Mammary epithelial cell (primary cell): ENCODE measurements at regions of chr18 and their contacts with region 1.

Region 1: DNA sequence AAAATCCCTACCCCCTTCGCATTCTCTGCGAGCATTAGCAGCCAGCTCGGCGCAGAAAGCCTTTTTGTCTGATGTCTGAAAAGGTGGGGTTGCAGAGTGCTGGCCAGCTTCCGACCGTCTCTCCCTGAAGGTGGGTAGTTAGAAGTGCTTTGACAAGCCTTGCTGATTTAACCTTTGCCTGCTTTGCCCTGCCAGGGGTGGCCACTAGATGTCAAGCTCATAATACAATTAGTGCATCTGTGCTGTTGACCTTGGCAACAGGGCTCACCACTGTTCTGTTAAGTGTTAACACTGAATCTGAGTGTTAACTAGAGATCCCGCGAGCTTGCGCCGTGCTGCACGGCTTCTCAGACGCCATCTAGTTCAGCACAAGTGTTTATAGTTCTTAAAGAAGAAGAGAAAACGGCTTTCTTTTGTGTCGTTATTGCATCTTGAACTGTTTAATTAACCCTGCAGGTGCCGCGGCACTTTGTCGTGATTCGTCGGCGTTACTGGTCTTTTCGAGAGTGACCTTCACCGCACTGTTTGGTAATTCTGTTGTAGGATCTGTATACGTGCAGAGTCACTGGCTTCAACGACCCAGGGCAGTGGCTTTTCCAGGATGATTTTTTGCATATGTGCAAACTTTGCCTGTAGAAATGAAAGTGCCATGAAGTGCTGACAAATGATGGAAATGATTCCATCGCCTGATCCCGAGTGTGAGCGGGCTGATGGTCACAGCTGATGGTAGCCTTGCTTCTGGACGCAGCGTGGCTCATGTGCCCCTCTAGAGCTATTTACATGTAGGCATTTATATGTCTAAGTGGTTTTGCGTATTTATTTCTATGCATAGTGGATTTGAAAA is 5.5 kb downstream of the SALL3 start:
- DNase-seq: peak; percentile 29
- H3K4me3 ChIP-seq: no peak overlapping the region
- H3K27ac ChIP-seq: no peak overlapping the region
- H3K4me1 ChIP-seq: no peaks in the 10 kb centered on the region
- H3K27me3 ChIP-seq: peaks cover 26% of the 10 kb centered on the region
- CTCF ChIP-seq: peak; percentile 38 to 63

Region 2: GRCh38 chr18:77207540-77207939 is 1777.6 kb before region 1 on chr18:
- CTCF ChIA-PET with region 1: interaction called, 10 read pairs
- dilution Hi-C with region 1: no loop called
- in situ Hi-C with region 1: no loop called
- intact Hi-C with region 1: no loop called
- DNase-seq: peak; percentile 42
- H3K4me3 ChIP-seq: no peak overlapping the region
- H3K27ac ChIP-seq: no peak overlapping the region
- H3K4me1 ChIP-seq: no peaks in the 10 kb centered on the region
- H3K27me3 ChIP-seq: no peaks in the 10 kb centered on the region
- CTCF ChIP-seq: peak; percentile 67 to 78

Region 3: GRCh38 chr18:78857314-78858150 is 127.6 kb before region 1 on chr18:
- CTCF ChIA-PET with region 1: no interaction called
- dilution Hi-C with region 1: no loop called
- in situ Hi-C with region 1: no loop called
- intact Hi-C with region 1: no loop called
- DNase-seq: no peak
- H3K4me3 ChIP-seq: no peak overlapping the region
- H3K27ac ChIP-seq: no peak overlapping the region
- H3K4me1 ChIP-seq: no peaks in the 10 kb centered on the region
- H3K27me3 ChIP-seq: no peaks in the 10 kb centered on the region
- CTCF ChIP-seq: no peak

Region 4: DNA sequence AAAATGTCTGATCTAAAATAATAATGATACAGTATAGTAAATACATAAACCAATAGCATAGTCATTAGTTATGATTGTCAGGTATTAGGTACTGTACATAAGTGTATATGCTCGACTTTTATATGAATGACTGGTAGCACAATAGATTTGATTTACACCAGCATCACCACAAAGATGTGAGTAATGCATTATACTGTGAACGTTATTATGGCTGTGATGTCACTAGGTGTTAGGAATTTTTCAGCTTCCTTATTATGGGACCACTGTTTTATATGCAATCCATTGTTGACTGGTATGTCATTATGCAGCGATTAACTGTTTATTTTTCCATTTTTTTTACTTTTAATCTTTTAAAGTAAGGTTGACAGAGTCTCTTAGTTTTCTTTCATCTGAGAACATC is 107.7 kb after region 1 on chr18:
- CTCF ChIA-PET with region 1: no interaction called
- dilution Hi-C with region 1: no loop called
- in situ Hi-C with region 1: no loop called
- intact Hi-C with region 1: no loop called
- DNase-seq: peak; percentile 40
- H3K4me3 ChIP-seq: no peak overlapping the region
- H3K27ac ChIP-seq: no peak overlapping the region
- H3K4me1 ChIP-seq: peaks cover 9% of the 10 kb centered on the region
- H3K27me3 ChIP-seq: no peaks in the 10 kb centered on the region
- CTCF ChIP-seq: no peak

Region 5: DNA sequence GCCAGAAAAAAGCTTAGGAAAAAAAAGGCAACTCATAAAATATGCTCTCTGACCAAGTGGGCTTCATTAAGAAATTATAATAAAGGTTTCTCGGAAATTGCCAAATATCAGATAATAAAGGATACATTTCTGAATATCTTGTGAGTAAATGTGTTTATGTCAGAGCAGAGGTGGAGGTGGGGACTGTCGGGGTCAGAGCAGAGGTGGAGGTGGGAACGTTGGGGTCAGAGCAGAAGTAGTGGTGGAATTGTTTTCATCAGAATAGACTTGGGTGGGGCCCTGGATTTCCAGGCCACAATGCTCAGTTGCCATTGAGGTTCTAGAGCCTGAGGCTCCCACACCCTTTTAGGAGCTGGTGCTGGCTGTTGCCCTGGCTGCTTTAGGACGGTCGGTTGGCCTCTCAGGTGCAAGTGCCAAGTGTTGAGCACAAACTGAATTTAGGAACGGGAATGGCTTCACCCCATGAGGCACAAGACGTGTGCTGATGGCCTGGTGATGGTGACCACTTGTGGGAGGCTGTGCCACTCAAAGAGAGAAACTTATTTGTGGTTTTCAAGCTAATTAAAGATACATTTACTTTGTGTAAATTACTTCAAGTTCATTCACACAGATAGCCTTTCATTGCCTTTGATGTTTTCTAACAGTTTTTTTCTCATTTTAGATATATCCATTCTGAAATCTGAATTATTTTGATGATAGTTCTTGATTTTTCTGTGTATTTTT is 215.5 kb after region 1 on chr18:
- CTCF ChIA-PET with region 1: no interaction called
- dilution Hi-C with region 1: no loop called
- in situ Hi-C with region 1: no loop called
- intact Hi-C with region 1: loop called (anchors 2 kb)
- DNase-seq: peak; percentile 18
- H3K4me3 ChIP-seq: no peak overlapping the region
- H3K27ac ChIP-seq: no peak overlapping the region
- H3K4me1 ChIP-seq: peaks cover 34% of the 10 kb centered on the region
- H3K27me3 ChIP-seq: no peaks in the 10 kb centered on the region
- CTCF ChIP-seq: no peak

Region 6: DNA sequence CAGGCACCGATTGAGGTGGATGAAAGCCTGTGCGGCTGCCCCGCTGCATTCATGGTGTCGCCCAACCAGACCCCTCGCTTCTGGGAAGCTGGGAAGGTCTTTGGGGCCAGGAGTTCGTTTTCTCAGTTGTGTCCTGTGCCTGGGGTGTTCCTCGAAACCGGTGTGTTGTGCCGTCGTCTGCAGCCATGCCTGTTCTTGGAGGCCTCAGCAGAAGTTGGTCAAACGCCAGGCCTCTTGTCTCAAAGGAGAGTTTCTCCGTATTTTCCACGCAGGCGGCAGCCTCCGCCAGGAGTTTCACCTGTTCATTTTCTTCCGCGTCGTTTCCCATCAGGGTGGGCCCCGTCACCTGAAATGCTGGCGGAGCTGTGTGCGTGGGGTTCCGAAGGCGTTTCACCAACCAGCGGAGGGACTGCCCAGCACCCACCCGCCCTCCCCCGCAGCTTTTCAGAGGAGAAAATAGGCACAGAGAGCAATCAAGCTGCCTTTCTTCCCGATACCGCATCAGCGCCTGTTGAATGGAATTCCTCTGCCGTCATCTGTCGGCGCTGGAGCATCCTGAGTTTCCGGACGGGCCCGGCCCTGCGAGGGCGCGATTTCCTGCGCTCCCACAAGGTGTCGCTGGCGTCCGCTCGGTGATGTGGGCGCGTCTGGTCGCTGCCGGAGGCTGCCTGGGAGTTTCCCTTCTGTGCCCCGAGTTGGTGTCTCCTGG is 393.5 kb after region 1 on chr18:
- CTCF ChIA-PET with region 1: no interaction called
- dilution Hi-C with region 1: no loop called
- in situ Hi-C with region 1: no loop called
- intact Hi-C with region 1: loop called (anchors 2 kb)
- DNase-seq: peak; percentile 71
- H3K4me3 ChIP-seq: no peak overlapping the region
- H3K27ac ChIP-seq: no peak overlapping the region
- H3K4me1 ChIP-seq: no peaks in the 10 kb centered on the region
- H3K27me3 ChIP-seq: no peaks in the 10 kb centered on the region
- CTCF ChIP-seq: peak; percentile 80 to 97

Region 7: GRCh38 chr18:79644006-79644665 is 659.0 kb after region 1 on chr18:
- CTCF ChIA-PET with region 1: no interaction called
- dilution Hi-C with region 1: no loop called
- in situ Hi-C with region 1: no loop called
- intact Hi-C with region 1: loop called (anchors 1 kb)
- DNase-seq: peak; percentile 32
- H3K4me3 ChIP-seq: no peak overlapping the region
- H3K27ac ChIP-seq: no peak overlapping the region
- H3K4me1 ChIP-seq: no peaks in the 10 kb centered on the region
- H3K27me3 ChIP-seq: no peaks in the 10 kb centered on the region
- CTCF ChIP-seq: peak; percentile 77 to 96